GM12878 (cell line): ENCODE measurements at regions of chr18 and their contacts with region 1.

Region 1: DNA sequence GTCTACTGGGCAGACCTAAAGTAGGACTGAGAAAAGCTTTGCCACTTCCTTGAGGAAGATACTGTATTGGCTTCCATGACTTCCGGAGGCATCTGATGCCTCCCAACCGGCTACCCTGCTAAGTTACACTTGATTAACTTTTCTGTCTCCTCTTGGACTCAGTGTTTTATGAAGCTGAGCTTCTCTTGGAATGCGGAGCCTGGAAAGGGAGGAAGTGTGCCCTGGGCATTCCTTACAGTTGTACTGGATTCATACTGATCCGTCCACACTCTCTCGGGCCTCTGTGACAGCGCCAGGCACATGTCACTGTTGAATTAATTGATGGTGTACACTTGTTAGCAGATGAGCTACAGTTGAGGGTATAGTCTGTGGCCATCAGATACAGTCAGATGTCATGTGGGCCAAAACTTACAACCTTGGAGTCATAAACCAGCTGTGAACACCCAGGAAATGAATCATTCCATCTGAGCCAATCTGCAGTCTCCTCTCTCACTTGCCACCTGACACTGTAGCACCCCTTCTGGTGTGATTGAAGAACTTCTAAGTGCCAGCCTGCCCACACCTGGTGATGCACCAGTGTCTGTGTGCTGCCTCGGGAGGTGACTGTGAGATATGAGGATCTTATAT is 122.5 kb downstream of the FHOD3 start:
- DNase-seq: no peak
- ATAC-seq: peak; percentile 94
- H3K4me3 ChIP-seq: no peak overlapping the region
- H3K27ac ChIP-seq: no peak overlapping the region
- H3K4me1 ChIP-seq: no peaks in the 10 kb centered on the region
- H3K27me3 ChIP-seq: no peaks in the 10 kb centered on the region
- CTCF ChIP-seq: peak; percentile 19 to 47 (median 31); a peak in 5 of 6 replicates
- EP300 ChIP-seq: no peak
- POLR2A ChIP-seq: no peak
- RAD21 ChIP-seq: peak; percentile 22; the same call in 1 of the 2 replicates

Region 2: GRCh38 chr18:36066001-36066400 is 354.0 kb before region 1 on chr18:
- CTCF ChIA-PET with region 1: no interaction called
- POLR2A ChIA-PET with region 1: no interaction called
- RAD21 ChIA-PET with region 1: no interaction called
- SMC1A ChIA-PET with region 1: no interaction called
- in situ Hi-C with region 1: no loop called
- intact Hi-C with region 1: no loop called
- DNase-seq: no peak
- ATAC-seq: no peak
- H3K4me3 ChIP-seq: peak overlapping the region; percentile 89
- H3K27ac ChIP-seq: peak overlapping the region; percentile 42; the same call in 1 of the 2 replicates
- H3K4me1 ChIP-seq: no peaks in the 10 kb centered on the region
- H3K27me3 ChIP-seq: no peaks in the 10 kb centered on the region
- CTCF ChIP-seq: no peak
- EP300 ChIP-seq: no peak
- POLR2A ChIP-seq: no peak
- RAD21 ChIP-seq: no peak

Region 3: DNA sequence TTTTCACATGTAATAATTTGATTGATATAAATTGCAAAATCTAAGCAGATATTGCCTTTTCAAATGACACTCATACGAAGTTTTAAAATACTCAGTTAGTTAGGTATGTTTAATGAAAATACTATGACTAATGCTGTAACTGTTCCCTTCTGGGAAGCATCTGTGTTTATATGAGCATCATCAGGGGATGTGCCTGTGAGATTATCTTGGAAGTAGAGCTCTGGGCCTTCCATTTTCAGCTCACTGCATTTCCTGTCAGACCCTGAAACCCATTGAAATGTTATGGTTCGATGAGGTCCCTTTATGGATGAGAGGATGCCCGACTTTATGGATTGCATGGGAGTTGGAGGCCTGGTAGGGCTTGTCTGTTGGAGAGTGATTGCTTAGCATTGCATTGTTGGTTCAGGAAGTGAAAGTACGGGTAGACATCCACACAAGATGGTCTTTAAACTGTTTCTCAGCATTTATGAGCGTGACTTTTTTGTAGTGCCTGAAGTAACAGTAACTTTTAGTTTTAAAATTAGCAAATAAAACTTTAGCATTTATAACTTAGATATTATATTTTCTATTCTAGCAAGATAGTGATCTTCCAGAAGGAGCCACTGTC is 261.7 kb before region 1 on chr18:
- CTCF ChIA-PET with region 1: no interaction called
- POLR2A ChIA-PET with region 1: no interaction called
- RAD21 ChIA-PET with region 1: no interaction called
- SMC1A ChIA-PET with region 1: no interaction called
- in situ Hi-C with region 1: no loop called
- intact Hi-C with region 1: no loop called
- DNase-seq: no peak
- ATAC-seq: no peak
- H3K4me3 ChIP-seq: no peak overlapping the region
- H3K27ac ChIP-seq: no peak overlapping the region
- H3K4me1 ChIP-seq: no peaks in the 10 kb centered on the region
- H3K27me3 ChIP-seq: no peaks in the 10 kb centered on the region
- CTCF ChIP-seq: no peak
- EP300 ChIP-seq: no peak
- POLR2A ChIP-seq: no peak
- RAD21 ChIP-seq: no peak

Region 4: DNA sequence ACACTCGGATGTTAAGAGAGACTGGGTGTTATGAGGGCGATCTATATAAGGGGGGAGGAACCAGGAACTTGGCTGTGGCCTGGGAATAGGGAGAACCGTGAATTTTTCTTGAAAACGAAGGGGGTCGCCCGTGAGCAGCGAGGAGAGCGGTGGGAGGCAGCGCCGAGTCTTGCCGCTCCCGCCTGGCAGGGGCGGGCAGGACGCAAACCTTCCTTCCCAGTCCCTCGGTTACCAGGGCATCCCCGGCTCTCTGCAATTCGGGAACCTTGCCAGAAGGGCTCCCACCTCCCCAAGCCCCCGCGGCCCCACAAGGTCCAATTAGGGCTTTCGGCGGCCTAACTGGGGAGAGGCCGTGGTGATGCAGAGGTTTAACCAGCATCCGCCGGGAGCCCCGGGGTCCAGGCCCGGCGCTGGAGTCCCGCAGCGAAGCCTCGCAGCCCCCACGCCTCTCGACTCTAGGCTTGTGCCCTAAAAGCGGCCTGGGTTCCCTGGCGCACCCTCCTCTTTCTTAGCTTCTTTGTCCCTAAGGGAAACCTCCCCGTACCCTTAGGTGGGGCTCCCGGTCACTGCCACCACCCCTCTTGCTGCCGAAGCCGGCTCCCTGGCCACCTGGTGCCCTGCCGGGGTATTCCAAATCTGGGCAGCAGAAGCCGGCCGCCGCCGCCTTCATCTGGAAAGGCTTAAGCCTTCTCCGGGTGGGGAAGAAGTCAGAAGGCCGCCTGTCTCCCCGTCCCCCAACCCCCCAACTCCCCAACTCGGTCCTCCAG is 123.2 kb before region 1 on chr18:
- CTCF ChIA-PET with region 1: interaction called, 6 read pairs
- POLR2A ChIA-PET with region 1: no interaction called
- RAD21 ChIA-PET with region 1: interaction called, 13 read pairs
- SMC1A ChIA-PET with region 1: interaction called, 19 read pairs
- in situ Hi-C with region 1: no loop called
- intact Hi-C with region 1: no loop called
- DNase-seq: no peak
- ATAC-seq: peak; percentile 49
- H3K4me3 ChIP-seq: peak overlapping the region; percentile 69
- H3K27ac ChIP-seq: no peak overlapping the region
- H3K4me1 ChIP-seq: no peaks in the 10 kb centered on the region
- H3K27me3 ChIP-seq: peaks cover 0 to 4% of the 10 kb centered on the region in 2 experiments; a peak in 1 of 4 replicates
- CTCF ChIP-seq: peak; percentile 17 to 56 (median 34); a peak in 4 of 6 replicates
- EP300 ChIP-seq: no peak
- POLR2A ChIP-seq: no peak
- RAD21 ChIP-seq: peak; percentile 40; the same call in 1 of the 2 replicates

Region 5: GRCh38 chr18:36372903-36373311 is 47.1 kb before region 1 on chr18:
- CTCF ChIA-PET with region 1: interaction called, 10 read pairs
- POLR2A ChIA-PET with region 1: no interaction called
- RAD21 ChIA-PET with region 1: interaction called, 5 read pairs
- SMC1A ChIA-PET with region 1: interaction called, 1,180 read pairs
- in situ Hi-C with region 1: no loop called
- intact Hi-C with region 1: no loop called
- DNase-seq: no peak
- ATAC-seq: peak; percentile 57
- H3K4me3 ChIP-seq: no peak overlapping the region
- H3K27ac ChIP-seq: no peak overlapping the region
- H3K4me1 ChIP-seq: no peaks in the 10 kb centered on the region; the same call in 1 of the 2 replicates
- H3K27me3 ChIP-seq: no peaks in the 10 kb centered on the region
- CTCF ChIP-seq: peak; percentile 16 to 33 (median 32); a peak in 3 of 6 replicates
- EP300 ChIP-seq: no peak
- POLR2A ChIP-seq: no peak
- RAD21 ChIP-seq: peak; percentile 53; the same call in 1 of the 2 replicates

Region 6: GRCh38 chr18:36436387-36436786 is 16.4 kb after region 1 on chr18:
- CTCF ChIA-PET with region 1: interaction called, 83 read pairs
- POLR2A ChIA-PET with region 1: interaction called, 23 read pairs
- RAD21 ChIA-PET with region 1: interaction called, 34 read pairs
- SMC1A ChIA-PET with region 1: interaction called, 253 read pairs
- in situ Hi-C with region 1: no loop called
- intact Hi-C with region 1: no loop called
- DNase-seq: no peak
- ATAC-seq: no peak
- H3K4me3 ChIP-seq: no peak overlapping the region
- H3K27ac ChIP-seq: no peak overlapping the region
- H3K4me1 ChIP-seq: no peaks in the 10 kb centered on the region
- H3K27me3 ChIP-seq: no peaks in the 10 kb centered on the region
- CTCF ChIP-seq: no peak
- EP300 ChIP-seq: no peak
- POLR2A ChIP-seq: no peak
- RAD21 ChIP-seq: no peak

Region 7: DNA sequence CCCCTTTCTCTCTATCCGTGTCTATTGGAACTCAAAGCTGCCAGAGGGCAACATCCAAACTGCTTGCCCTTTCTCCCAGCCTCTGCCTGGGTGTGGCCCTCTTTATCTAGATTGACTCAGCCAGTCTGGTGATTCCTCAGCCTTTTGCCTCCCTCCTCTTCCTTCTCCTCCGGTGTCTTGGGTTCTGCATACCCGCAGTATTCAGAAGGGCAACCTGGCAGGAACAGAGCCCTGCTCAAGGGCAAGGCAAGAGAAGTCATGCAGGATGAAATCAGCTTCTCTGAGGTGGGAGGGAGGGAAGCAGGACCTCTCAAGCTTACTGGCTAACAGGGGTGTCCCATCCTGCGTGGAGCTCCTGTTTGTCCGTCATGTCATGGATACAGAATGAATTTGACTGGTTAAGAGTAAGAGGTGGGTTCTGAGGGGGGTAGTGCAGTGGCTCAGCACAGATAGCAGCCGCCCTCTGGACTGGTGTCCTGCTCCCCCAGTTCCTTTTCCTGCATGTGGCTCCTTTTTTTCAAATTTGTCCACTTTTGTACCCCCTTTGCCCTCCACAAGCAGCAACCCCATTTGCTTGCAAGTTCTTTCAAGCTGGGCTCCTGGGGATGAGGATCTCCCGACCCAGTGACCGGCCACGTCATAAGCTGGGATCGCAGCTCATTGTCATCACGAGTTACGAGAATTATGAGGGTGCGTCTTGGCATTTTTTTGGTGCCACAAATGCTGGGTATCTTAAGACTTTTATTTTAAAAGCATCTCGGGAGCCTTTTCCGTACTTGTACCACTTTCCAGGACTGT is 31.6 kb after region 1 on chr18:
- CTCF ChIA-PET with region 1: interaction called, 6 read pairs
- POLR2A ChIA-PET with region 1: no interaction called
- RAD21 ChIA-PET with region 1: interaction called, 10 read pairs
- SMC1A ChIA-PET with region 1: interaction called, 12 read pairs
- in situ Hi-C with region 1: no loop called
- intact Hi-C with region 1: no loop called
- DNase-seq: no peak
- ATAC-seq: peak; percentile 5; the same call in 2 of the 3 replicates
- H3K4me3 ChIP-seq: no peak overlapping the region
- H3K27ac ChIP-seq: no peak overlapping the region
- H3K4me1 ChIP-seq: no peaks in the 10 kb centered on the region; the same call in 1 of the 2 replicates
- H3K27me3 ChIP-seq: no peaks in the 10 kb centered on the region
- CTCF ChIP-seq: no peak
- EP300 ChIP-seq: no peak
- POLR2A ChIP-seq: no peak
- RAD21 ChIP-seq: no peak

Region 8: GRCh38 chr18:36564841-36565240 is 144.8 kb after region 1 on chr18:
- CTCF ChIA-PET with region 1: no interaction called
- POLR2A ChIA-PET with region 1: no interaction called
- RAD21 ChIA-PET with region 1: interaction called, 3 read pairs
- SMC1A ChIA-PET with region 1: interaction called, 11 read pairs
- in situ Hi-C with region 1: no loop called
- intact Hi-C with region 1: no loop called
- DNase-seq: no peak
- ATAC-seq: no peak
- H3K4me3 ChIP-seq: no peak overlapping the region
- H3K27ac ChIP-seq: no peak overlapping the region
- H3K4me1 ChIP-seq: no peaks in the 10 kb centered on the region
- H3K27me3 ChIP-seq: no peaks in the 10 kb centered on the region
- CTCF ChIP-seq: no peak
- EP300 ChIP-seq: no peak
- POLR2A ChIP-seq: no peak
- RAD21 ChIP-seq: no peak